ENCODE measurements at regions of chr16 and their contacts with region 1.

Region 1: DNA sequence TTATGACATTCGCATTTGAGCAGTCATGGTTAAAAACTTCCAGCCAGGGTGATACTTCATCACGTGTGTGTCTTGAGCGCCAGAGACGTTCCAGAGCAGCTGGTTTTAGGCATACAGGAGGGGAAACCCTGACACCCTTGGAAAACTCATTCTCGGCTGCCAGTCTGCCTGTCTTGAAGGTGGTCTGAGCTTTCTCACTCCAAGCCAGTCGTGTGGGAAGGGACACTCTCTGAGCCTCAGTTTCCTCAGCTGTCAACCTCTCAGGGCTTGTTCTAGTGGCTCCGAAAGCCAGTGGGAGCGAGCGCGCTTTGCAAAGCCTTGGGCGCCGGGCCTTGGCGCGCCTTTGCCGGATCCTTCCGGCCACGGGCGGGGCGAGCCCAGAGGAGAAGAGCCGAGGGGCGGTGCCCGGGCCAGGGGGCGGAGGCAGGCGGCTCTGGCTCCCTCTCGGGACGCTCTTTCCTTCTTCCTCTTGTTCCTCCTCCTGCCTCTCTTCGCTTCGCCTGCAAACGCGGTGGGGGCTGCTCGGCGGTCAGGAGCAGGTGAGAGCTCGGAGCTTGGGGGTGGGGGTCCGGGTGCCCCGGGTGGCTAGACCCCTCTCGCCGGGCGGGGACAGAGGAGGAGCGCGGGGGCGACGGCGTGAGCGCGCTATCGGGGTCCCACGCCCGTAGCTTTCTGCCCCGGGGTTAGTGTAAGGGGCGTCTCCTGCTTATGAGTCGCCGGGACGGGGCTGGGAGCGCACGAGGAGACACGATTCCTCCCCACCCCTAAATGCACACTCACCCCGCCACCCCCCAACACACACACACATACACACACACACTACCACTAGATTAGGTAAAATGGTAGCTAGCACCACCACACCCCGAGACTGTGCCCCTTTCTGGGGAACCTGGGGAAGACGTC is at the start of gene LDAF1:
- DNase-seq: peak; percentile 28 to 91
- H3K4me3 ChIP-seq: peak within 1 kb of the TSS; percentile 85 to 87
- H3K27ac ChIP-seq: peak within 1 kb of the TSS; percentile 87 to 91
- H3K4me1 ChIP-seq: peaks cover 15 to 22% of the 10 kb centered on the region in 2 donors
- H3K27me3 ChIP-seq: no peaks in the 10 kb centered on the region
- CTCF ChIP-seq: no peak
- total RNA-seq, gene LDAF1: 23.5 TPM

Region 2: DNA sequence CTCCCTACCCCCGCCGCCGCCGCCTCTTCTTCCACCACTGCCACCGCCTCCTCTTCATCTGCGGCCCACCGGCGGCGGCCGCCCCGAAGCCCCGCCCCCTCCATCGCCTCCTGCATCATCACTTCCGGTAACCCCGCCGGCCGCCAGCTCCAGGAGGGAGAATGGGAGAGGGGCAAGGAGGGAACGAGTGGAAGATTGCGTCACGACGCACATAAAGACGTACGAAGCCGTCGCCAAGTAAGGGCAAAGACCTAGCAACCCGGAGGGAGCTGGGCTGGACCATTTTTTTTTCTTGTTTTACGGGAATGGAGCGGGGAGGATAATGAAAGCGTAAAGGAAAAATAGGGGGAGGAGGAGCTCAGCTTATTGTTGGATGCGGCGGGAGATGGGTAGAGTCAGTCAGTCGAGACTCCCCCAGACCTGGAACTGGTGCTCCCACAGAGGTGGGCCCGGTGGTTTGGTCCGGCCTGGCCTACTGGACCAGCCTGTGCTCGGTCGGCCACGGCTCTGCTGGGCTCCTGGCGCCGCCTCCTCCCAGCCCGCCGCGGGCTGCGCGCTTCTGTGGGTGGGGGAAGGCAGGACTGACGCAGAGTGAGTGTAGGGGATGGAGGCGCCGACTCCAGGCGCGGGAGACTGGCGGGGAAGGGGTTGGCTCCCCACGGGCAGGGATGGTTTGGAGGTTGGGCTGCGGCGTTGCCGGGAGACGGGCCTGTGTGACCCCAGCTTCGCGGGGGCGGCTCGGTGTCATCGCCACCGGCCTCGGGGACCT is 258.0 kb before region 1 on chr16 and contains the starts of genes DCUN1D3 and LYRM1:
- intact Hi-C with region 1: loop called (anchors 5 kb)
- DNase-seq: peak; percentile 92 to 99
- H3K4me3 ChIP-seq: peak within 1 kb of the TSS; percentile 80 to 93
- H3K27ac ChIP-seq: peak within 1 kb of the TSS; percentile 96 to 100
- H3K4me1 ChIP-seq: peaks cover 12 to 56% of the 10 kb centered on the region in 2 donors
- H3K27me3 ChIP-seq: no peaks in the 10 kb centered on the region
- CTCF ChIP-seq: no peak
- total RNA-seq, gene DCUN1D3: 9.8 TPM
- total RNA-seq, gene LYRM1: 3.9 TPM

Region 3: DNA sequence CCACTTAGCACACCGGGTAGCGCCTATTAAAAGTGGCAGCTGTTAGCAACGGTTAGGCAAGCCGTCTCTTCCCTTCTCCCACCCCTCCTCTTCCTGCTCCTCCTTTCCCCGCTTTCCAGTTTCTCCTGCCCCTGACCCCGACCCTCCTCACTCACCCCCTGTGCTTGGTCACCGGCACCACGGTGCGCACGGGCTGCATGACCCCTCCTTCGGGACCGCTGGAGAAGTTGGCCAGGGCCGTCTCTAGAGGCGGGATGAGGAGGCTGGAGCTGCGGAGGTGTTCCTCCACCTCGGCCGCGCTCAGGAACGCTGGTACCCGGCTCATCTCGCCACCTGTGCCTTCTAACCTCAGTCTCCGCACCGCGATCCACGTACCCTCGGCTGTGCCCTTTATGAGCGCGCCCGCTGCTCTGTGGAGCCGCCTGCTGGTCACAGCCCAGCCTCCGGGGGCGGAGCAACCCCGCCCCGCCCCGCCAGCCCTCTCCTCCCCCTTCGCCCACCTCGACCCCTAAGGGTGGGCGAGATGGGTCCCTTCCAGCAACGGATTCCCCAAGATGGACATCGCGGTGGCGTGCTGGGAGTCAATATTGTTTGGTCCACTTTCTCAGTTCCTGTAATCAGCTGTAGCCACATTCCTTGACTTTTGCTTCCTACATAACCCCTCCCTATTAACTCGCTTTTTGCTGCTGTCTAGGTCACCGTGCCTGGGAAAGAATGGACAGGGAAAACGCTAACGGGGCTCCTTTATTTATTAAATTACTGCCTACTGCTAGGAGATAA is 119.7 kb after region 1 on chr16 and contains the start of gene CRYM:
- intact Hi-C with region 1: loop called (anchors 1 kb)
- DNase-seq: peak in 1 of 2 donors; percentile 70
- H3K4me3 ChIP-seq: peak within 1 kb of the TSS; percentile 56 to 62
- H3K27ac ChIP-seq: peak within 1 kb of the TSS in 1 of 2 donors; percentile 24
- H3K4me1 ChIP-seq: no peaks in the 10 kb centered on the region
- H3K27me3 ChIP-seq: no peaks in the 10 kb centered on the region
- CTCF ChIP-seq: peak; percentile 65 to 91 (median 85)
- total RNA-seq, gene CRYM: not detected

Region 4: DNA sequence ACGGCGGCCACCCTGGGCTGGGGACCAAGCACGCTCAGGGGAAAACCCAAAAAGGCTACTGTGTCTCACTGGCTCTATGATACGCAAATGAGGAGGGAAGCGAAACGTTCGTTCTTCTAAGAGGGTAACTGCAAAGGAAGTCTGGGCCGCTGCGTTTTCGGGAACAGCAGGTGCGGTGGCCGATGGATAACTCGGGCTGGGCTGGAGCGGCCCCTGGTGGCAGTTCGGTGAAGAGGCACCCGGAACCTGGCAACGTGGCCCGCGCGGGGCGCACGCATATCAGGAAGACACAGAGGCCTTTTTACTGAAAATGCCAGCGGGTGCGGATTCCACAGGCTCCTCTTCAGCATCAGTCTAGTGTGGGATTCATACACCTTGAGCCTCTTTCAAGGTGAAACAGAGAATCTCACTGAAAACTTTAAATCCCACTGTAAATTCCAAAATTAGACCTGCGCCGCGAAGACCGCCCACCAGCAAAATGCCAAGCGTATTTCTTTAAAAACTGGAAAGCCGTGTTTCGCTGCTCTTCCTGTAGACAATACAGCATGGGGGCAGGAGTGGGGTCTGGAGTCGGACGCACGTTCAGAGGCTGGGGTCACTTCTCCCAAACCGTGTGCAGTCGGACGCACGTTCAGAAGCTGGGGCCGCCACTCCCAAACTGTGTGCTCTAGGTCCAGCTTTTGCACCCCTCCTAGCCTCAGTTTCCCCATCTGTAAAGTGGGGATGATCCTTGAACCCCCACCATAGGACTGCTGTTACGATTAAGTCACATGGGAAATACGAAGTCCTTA is 396.5 kb after region 1 on chr16:
- intact Hi-C with region 1: loop called (anchors 5 kb)
- DNase-seq: peak in 1 of 2 donors; percentile 96
- H3K4me3 ChIP-seq: peak overlapping the region; percentile 26 to 41
- H3K27ac ChIP-seq: no peak overlapping the region
- H3K4me1 ChIP-seq: peaks cover 0 to 19% of the 10 kb centered on the region in 2 donors
- H3K27me3 ChIP-seq: no peaks in the 10 kb centered on the region
- CTCF ChIP-seq: peak; percentile 93 to 100 (median 93)

Region 5: GRCh38 chr16:23149349-23149996 is 1991.0 kb after region 1 on chr16 and contains the start of gene USP31:
- intact Hi-C with region 1: loop called (anchors 10 kb)
- DNase-seq: peak; percentile 82 to 97
- H3K4me3 ChIP-seq: peak within 1 kb of the TSS; percentile 76 to 88
- H3K27ac ChIP-seq: peak within 1 kb of the TSS; percentile 75 to 83
- H3K4me1 ChIP-seq: peaks cover 3 to 31% of the 10 kb centered on the region in 2 donors
- H3K27me3 ChIP-seq: no peaks in the 10 kb centered on the region
- CTCF ChIP-seq: no peak
- total RNA-seq, gene USP31: 6.2 TPM

Measured in ascending aorta (tissue), 2 donors.